ENCODE measurements at regions of chr3 and their contacts with region 1.

Region 1: DNA sequence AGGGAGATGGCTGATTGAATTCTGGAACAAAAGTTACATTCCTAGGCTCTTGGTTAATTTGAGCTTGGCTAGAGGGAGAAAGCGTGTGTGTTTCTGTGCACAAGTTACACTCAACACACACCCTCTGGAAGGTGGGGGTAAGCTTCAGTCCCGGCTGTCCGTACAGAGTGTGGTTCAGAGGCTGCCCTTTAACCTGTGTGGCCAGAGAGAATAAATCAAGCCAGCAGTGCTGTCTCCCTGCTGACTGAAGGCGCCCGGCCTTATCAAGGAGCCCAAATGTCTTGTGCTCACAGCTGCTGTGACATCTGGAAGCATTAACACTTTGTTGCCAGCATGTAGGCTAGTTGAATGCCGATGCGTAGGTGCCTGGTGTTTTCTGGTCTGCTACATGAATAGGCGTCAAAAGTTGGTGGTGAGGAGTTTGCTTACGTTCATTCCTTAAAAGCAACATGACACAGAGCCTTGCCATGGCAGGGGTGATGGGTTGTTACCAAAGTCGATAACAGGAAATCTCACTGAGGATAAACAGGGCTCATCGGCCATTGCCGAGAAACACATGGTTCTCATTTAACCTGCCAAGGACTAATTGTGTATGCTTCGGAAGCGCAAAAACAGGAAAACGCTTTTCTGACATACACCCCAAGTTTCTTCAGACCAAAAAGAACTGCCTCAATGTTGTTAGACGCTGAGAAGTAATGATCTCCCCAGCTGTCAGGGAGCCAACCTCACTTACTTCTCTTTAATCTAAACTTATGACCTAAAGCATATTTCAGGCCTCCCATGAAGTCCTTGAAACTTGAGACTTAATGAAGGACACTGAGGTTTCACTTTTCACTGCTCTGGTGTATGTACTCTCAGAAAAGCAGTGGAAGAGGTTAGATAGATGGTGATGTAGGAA is 95.8 kb upstream of the CTDSPL start:
- DNase-seq: peak; percentile 75 to 81
- H3K4me3 ChIP-seq: no peak overlapping the region
- H3K27ac ChIP-seq: peak overlapping the region; percentile 71 to 78
- H3K4me1 ChIP-seq: peaks cover 0 to 77% (median 39%) of the 10 kb centered on the region in 4 donors
- H3K27me3 ChIP-seq: no peaks in the 10 kb centered on the region
- CTCF ChIP-seq: no peak

Region 2: DNA sequence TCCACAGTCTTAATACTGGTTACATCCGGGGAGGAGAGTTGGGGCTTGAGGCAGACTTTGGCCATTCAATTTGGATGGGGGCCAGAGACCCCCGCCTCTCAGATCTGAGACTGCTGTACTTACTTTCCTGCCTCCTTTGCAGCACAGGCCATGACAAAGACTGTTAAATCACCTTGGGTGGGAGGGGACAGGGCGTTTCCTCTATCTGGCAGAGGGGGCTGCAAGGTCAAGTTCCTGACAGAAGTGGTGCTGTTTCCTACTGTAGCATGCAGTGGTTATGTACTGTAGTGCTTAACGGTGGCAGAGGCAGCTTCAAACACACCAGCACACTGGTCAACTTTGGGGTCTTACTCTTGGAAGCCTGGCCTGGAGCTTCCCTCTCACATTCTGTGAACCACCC is 330.3 kb before region 1 on chr3:
- intact Hi-C with region 1: no loop called
- DNase-seq: no peak
- H3K4me3 ChIP-seq: no peak overlapping the region
- H3K27ac ChIP-seq: no peak overlapping the region
- H3K4me1 ChIP-seq: no peaks in the 10 kb centered on the region
- H3K27me3 ChIP-seq: no peaks in the 10 kb centered on the region
- CTCF ChIP-seq: no peak

Region 3: GRCh38 chr3:37814547-37814946 is 48.7 kb after region 1 on chr3:
- intact Hi-C with region 1: loop called (anchors 10 kb)
- DNase-seq: no peak
- H3K4me3 ChIP-seq: no peak overlapping the region
- H3K27ac ChIP-seq: peak overlapping the region; percentile 76 to 78
- H3K4me1 ChIP-seq: peaks cover 0 to 48% (median 37%) of the 10 kb centered on the region in 4 donors
- H3K27me3 ChIP-seq: no peaks in the 10 kb centered on the region
- CTCF ChIP-seq: peak; percentile 40 to 50

Measured in tibial artery (tissue), 4 donors.